ENCODE measurements at regions of chr1 and their contacts with region 1.

Region 1: GRCh38 chr1:202122639-202123335 is at the start of gene GPR37L1:
- DNase-seq: no peak
- H3K4me3 Mint-ChIP-seq: no peak within 1 kb of the TSS
- H3K27ac Mint-ChIP-seq: no peak within 1 kb of the TSS
- H3K4me1 Mint-ChIP-seq: no peaks in the 10 kb centered on the region
- H3K27me3 Mint-ChIP-seq: peaks cover 8% of the 10 kb centered on the region
- total RNA-seq, gene GPR37L1: not detected in 2 replicates

Region 2: GRCh38 chr1:202009326-202010179 is 113.2 kb before region 1 on chr1:
- intact Hi-C with region 1: loop called (anchors 1 kb)
- DNase-seq: peak; percentile 42
- H3K4me3 Mint-ChIP-seq: no peak overlapping the region
- H3K27ac Mint-ChIP-seq: no peak overlapping the region
- H3K4me1 Mint-ChIP-seq: no peaks in the 10 kb centered on the region
- H3K27me3 Mint-ChIP-seq: no peaks in the 10 kb centered on the region

Measured in activated T-helper 1 cell treated with anti-CD3 and anti-CD28 coated beads, Interleukin-12 subunit alpha, Interleukin-12 subunit beta, Interleukin-2, Interleukin-4 antibody, amounts not matched to agents 30 ng/mL and 10 ng/mL and 1 ng/mL, durations not matched to agents 14 hours and 24 hours and 36 hours (primary cell).